Cardiac septum (tissue), 1 donor: ENCODE measurements at regions of chr15 and their contacts with region 1.

Region 1: DNA sequence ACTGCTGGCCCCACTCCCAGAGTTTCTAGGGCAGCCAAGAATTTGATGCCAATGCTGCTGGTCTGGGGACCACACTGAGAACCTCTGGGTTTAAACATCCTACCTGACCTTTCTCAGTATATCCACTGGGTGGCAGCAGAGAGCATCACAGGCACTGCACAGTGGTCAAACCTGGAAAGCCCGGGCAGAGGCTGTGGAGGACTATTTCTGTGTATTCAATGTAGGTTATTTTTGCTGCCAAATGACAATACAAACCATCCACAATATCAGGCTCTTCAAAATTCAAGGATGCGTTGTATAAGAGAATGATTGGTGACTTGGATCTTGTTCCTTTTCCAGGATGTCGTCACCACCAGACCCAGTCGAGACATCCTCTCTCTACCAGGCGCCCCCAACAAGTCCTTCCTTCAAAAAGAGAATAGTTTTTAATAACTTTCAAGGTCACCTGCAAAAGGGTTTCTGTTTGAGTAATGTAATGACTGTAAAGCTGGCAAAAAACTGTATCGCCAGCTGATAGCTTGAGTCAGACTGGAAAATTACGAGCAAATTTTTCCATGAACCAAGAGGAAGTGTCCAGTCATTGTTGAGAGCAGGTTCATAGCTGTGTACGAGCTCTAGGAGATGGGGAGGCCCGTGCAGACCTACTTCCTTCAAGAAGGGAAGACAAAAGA is 30.5 kb upstream of the MYZAP start:
- DNase-seq: peak; percentile 84

Region 2: DNA sequence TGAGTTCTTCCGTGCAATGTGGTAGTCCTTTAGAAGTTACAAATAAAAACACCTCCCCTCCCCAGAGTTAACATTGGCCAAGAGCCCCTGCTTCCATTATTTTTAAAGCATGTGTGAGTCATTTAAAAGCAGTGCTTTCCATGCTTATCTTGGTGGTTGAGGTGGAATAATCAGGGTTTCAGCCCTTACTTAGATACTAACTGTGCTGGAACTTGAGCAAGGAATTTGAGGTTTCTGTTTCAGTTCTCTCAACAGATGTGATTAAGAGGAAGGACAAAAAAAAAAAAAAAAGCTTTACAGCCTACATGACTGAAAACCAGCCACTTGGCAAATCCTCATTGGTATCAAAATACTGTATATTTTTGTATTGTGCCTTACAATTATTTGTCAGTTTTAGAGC is 120.4 kb before region 1 on chr15:
- intact Hi-C with region 1: no loop called
- DNase-seq: no peak

Region 3: DNA sequence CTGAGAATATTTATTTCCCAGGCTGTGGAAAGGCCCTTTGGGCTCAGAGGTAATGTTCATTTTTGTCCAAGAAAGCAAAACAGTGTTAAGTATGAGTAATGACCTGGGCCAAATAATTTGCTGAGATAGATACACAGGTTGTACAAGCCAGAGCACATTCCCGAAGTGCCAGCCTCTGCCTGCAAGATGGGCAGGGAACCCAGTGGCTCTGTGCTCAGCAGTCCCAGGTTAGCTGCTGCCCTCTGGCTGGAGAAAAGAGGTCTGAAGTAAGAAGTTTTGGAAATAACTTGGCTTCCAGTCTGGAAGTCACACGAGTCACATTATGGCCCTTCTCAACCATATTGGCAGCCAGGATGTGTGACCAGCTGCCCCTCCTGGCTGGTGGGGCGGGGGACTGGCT is 50.8 kb after region 1 on chr15:
- intact Hi-C with region 1: loop called (anchors 1 kb)
- DNase-seq: peak; percentile 72

Region 4: DNA sequence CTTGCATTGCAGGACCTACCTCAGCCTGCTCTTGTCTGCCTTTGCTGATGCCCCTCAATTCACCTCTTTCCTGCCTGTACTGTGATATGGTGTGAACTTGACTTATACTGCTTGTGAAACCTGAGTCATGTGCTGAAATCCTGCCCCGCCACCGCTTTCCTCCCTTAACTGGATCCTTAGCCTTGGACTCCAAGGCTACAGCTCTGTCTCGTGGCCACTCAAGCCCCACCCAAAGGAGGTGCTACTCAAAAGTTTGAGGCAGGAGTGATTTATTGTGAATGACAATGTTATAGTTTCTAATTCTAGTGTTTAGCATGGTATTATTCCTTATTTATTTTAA is 86.6 kb after region 1 on chr15:
- intact Hi-C with region 1: no loop called
- DNase-seq: no peak

Region 5: GRCh38 chr15:57706405-57707209 is 145.4 kb after region 1 on chr15 and contains the start of gene POLR2M:
- intact Hi-C with region 1: loop called (anchors 10 kb)
- DNase-seq: peak; percentile 95
- total RNA-seq, gene POLR2M: 80.8 TPM

Region 6: GRCh38 chr15:57861036-57861638 is 300.0 kb after region 1 on chr15:
- intact Hi-C with region 1: loop called (anchors 2 kb)
- DNase-seq: no peak